ENCODE measurements at regions of chr16 and their contacts with region 1.

Region 1: DNA sequence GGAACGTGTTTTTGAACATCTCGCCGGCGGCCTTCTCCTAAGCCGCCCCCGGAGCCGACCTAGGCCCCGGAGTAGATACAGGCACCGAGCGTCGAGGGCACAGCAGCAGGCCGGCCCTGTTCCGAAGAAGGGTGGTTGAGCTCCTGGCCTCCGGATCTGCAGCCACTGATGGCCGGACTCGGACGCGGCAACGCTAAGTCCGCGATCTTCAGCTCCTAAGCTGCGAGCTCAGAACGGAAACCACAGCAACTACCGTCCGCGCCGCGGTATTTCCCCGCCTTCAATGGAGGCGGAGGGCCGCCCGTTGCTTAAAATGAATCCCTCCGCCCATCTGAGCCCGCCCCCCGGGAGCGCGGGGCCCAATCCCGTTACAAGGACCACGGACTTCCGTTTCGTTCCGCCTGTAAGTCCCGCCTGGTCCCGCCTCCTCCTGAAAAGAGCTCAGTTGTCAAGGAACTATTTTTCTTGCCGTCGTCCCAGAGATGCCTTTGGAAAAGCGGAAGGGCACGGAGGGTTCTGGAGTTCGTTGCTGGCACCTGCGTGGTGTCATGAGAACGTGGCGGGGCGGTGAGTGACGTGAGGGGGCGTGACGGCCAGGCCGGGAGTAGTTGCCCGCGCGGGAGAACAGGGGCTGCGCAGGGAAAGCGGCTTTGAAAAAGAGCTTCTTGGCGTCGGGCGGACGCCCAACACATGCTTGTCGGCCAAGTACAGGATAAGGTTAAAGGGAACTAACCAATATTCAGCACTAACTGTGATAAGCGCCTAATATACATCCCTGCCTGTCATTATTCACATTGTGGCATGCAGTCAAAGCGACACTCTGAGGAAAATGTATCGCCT is at the start of gene CFAP20:
- DNase-seq: peak; percentile 95
- ATAC-seq: peak; percentile 95
- H3K4me3 ChIP-seq: peak within 1 kb of the TSS; percentile 59 to 77
- H3K27ac ChIP-seq: peak within 1 kb of the TSS; percentile 76
- H3K4me1 ChIP-seq: peaks cover 12% of the 10 kb centered on the region
- H3K27me3 ChIP-seq: no peaks in the 10 kb centered on the region
- CTCF ChIP-seq: no peak
- total RNA-seq, gene CFAP20: 25.9 TPM

Region 2: DNA sequence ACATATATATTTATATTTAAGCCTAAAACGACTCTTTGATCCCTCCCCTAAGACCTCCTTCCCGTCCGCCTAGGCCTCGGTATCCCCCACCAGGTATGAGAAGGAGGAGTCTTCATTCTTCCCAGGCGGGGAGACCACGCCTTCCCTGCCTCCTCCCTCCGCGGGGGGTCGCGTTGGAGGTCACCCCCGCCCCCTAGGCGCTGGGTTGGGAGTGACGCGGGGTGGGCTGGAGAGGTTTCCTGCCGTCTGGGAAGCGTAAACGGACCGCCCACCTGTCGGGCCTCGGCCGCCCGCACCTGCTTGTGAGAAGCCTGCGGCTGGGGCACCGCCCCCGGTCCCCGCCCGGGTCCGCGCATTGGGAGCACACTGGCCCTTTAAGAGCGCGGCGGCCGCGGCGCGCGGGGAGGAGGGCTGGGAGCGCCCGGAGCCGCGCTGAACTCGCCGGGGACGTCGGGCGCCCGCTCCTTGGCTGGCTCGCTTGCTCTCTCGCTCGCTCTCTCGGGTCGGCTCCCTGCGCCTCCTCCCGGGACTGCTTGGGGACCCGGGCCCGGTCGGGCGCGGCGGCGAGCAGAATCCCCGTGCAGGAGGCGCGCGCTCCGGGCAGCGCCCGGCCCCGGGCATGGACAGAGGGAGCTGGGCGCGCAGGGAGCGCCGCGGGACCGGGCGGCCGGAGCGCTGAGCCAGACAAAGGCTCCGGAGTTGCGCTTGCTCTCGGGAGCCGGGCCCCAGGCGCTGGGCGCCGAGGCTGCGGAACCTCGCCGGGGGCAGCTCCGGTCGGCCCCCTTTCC is 103.8 kb before region 1 on chr16 and contains the start of gene MMP15:
- CTCF ChIA-PET with region 1: no interaction called
- POLR2A ChIA-PET with region 1: interaction called, 14 read pairs
- in situ Hi-C with region 1: loop called (anchors 25 kb)
- intact Hi-C with region 1: loop called (anchors 2 kb)
- DNase-seq: no peak
- ATAC-seq: peak; percentile 79
- H3K4me3 ChIP-seq: peak within 1 kb of the TSS; percentile 53 to 62
- H3K27ac ChIP-seq: peak within 1 kb of the TSS; percentile 48; the same call in 1 of the 2 replicates
- H3K4me1 ChIP-seq: peaks cover 10% of the 10 kb centered on the region; the same call in 1 of the 2 replicates
- H3K27me3 ChIP-seq: no peaks in the 10 kb centered on the region
- CTCF ChIP-seq: no peak
- total RNA-seq, gene MMP15: 10.9 TPM

Region 3: DNA sequence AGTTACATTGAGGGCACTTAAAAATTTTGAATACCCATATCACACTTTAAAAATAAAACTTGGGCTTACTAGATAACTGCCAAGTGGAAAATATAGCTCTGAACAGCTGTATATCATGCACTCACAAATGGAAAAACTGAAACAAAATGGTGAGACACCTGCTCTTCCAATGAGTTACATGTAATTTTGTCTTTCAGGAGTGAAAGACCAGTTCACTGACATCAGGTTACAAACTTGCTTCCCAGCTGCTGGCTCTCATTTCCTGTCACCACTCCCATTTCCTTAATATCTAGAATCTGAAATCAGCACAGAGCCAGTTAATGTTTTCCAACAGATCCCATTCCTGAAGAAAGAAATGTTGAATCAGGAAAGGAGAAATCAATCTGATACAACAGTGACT is 57.8 kb after region 1 on chr16:
- CTCF ChIA-PET with region 1: interaction called, 14 read pairs
- POLR2A ChIA-PET with region 1: no interaction called
- in situ Hi-C with region 1: no loop called
- intact Hi-C with region 1: no loop called
- DNase-seq: no peak
- ATAC-seq: no peak
- H3K4me3 ChIP-seq: no peak overlapping the region
- H3K27ac ChIP-seq: no peak overlapping the region
- H3K4me1 ChIP-seq: no peaks in the 10 kb centered on the region
- H3K27me3 ChIP-seq: no peaks in the 10 kb centered on the region
- CTCF ChIP-seq: no peak